ENCODE measurements at regions of chr19 and their contacts with region 1.

Region 1: GRCh38 chr19:38224014-38224862 is at the start of gene DPF1:
- DNase-seq: peak; percentile 93 to 97
- H3K4me3 ChIP-seq: peak within 1 kb of the TSS; percentile 47
- H3K4me3 Mint-ChIP-seq: peak within 1 kb of the TSS; percentile 78
- H3K27ac Mint-ChIP-seq: peak within 1 kb of the TSS; percentile 29
- H3K4me1 ChIP-seq: peaks cover 9% of the 10 kb centered on the region; the same call in 1 of the 2 replicates
- H3K4me1 Mint-ChIP-seq: peaks cover 8% of the 10 kb centered on the region
- H3K27me3 ChIP-seq: no peaks in the 10 kb centered on the region
- H3K27me3 Mint-ChIP-seq: peaks cover 5% of the 10 kb centered on the region
- CTCF ChIP-seq: peak; percentile 37 to 54
- total RNA-seq, gene DPF1: 3.6 and 5.0 TPM in 2 replicates

Region 2: DNA sequence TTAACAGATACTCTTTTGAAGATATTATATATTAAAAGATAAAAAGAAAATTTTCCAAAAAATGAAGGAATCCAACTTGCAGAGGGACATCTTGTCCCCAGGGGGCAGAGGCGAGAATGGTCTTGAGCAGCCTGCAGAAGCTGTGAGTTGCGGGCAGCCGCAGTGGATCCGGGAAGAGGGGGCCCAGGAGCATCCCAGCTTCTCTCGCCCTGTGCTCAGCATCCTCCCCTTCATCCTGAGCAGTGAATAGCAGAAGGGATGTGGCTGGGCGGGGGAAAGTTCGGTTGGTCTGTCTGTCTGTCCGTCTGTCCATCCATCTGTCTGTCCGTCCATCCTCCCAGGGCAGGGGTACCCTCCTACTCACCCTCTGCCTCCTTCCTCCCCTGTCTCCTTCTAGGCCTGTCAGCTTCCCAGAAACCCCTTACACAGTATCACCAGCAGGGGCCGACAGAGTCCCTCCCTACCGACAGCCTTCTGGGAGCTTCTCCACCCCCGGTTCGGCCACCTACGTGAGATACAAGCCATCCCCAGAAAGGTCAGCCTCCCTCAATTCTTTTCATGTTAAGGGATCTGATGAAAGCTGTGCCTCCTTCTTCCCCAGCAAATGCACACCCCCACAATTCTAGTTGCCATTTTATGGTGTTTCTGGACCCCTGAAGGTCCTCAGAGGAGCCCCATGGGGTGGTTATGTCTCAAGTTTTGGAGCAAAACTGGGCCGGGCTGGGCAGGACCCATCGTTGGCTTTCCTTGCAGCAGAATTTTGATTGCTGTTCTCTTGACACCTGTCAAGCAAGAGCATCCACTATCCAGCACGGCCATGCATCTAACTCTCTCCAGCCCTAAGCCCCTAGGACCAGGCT is 81.8 kb before region 1 on chr19:
- CTCF ChIA-PET with region 1: interaction called, 3 read pairs
- POLR2A ChIA-PET with region 1: no interaction called
- intact Hi-C with region 1: loop called (anchors 10 kb)
- DNase-seq: peak; percentile 71 to 77
- H3K4me3 ChIP-seq: no peak overlapping the region
- H3K4me3 Mint-ChIP-seq: no peak overlapping the region
- H3K27ac Mint-ChIP-seq: no peak overlapping the region
- H3K4me1 ChIP-seq: no peaks in the 10 kb centered on the region
- H3K4me1 Mint-ChIP-seq: no peaks in the 10 kb centered on the region
- H3K27me3 ChIP-seq: no peaks in the 10 kb centered on the region; the same call in 1 of the 2 replicates
- H3K27me3 Mint-ChIP-seq: no peaks in the 10 kb centered on the region
- CTCF ChIP-seq: peak; percentile 84 to 87

Region 3: DNA sequence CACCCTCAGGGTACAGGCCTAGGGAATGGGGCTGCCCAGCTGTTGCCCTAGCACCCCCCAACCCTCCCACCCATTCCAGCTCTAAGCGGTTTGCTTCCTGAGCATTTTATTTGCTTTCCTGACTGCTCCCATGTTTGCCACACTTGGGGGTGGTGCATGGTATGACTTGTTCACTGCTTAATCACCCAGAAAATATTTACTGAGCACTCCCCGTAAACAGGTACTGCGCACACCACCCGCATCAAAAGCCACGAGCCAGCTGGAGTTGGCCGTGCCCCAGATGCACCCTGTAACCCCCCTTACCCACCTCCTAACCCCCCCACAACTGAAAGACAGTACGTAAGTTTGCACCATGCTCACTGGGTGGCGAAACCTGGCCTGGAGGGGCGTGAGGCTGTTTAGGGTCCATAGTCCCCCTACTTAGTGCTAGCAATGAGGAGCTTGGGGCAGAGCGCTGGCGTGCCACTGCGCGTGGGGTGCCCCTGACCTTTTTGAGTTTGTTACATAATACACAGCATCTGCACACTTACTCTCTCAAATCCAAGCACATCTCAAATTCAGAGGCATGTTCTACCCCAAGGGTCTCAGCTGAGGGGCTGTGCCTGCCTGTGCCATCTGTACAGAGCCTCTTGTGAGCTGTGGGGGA is 30.1 kb before region 1 on chr19:
- CTCF ChIA-PET with region 1: no interaction called
- POLR2A ChIA-PET with region 1: no interaction called
- intact Hi-C with region 1: no loop called
- DNase-seq: no peak
- H3K4me3 ChIP-seq: no peak overlapping the region
- H3K4me3 Mint-ChIP-seq: no peak overlapping the region
- H3K27ac Mint-ChIP-seq: peak overlapping the region; percentile 32
- H3K4me1 ChIP-seq: no peaks in the 10 kb centered on the region
- H3K4me1 Mint-ChIP-seq: no peaks in the 10 kb centered on the region
- H3K27me3 ChIP-seq: no peaks in the 10 kb centered on the region
- H3K27me3 Mint-ChIP-seq: no peaks in the 10 kb centered on the region
- CTCF ChIP-seq: no peak